Caco-2 (cell line): ENCODE measurements at regions of chr14 and their contacts with region 1.

Region 1: GRCh38 chr14:38867561-38868150 is 235.4 kb downstream of the SEC23A start:
- DNase-seq: peak; percentile 73 to 74
- H3K4me3 ChIP-seq: no peak overlapping the region
- H3K4me3 Mint-ChIP-seq: no peak overlapping the region
- H3K27ac Mint-ChIP-seq: no peak overlapping the region
- H3K4me1 ChIP-seq: peaks cover 3% of the 10 kb centered on the region; the same call in 1 of the 2 replicates
- H3K4me1 Mint-ChIP-seq: peaks cover 9% of the 10 kb centered on the region
- H3K27me3 ChIP-seq: no peaks in the 10 kb centered on the region; the same call in 1 of the 2 replicates
- H3K27me3 Mint-ChIP-seq: no peaks in the 10 kb centered on the region
- CTCF ChIP-seq: peak; percentile 73 to 80

Region 2: GRCh38 chr14:38442208-38442607 is 425.4 kb before region 1 on chr14:
- CTCF ChIA-PET with region 1: no interaction called
- POLR2A ChIA-PET with region 1: no interaction called
- intact Hi-C with region 1: no loop called
- DNase-seq: no peak
- H3K4me3 ChIP-seq: no peak overlapping the region
- H3K4me3 Mint-ChIP-seq: no peak overlapping the region
- H3K27ac Mint-ChIP-seq: no peak overlapping the region
- H3K4me1 ChIP-seq: no peaks in the 10 kb centered on the region
- H3K4me1 Mint-ChIP-seq: no peaks in the 10 kb centered on the region
- H3K27me3 ChIP-seq: no peaks in the 10 kb centered on the region
- H3K27me3 Mint-ChIP-seq: no peaks in the 10 kb centered on the region
- CTCF ChIP-seq: no peak

Region 3: GRCh38 chr14:38605193-38606114 is 262.2 kb before region 1 on chr14:
- CTCF ChIA-PET with region 1: interaction called, 4 read pairs
- POLR2A ChIA-PET with region 1: no interaction called
- intact Hi-C with region 1: loop called (anchors 1 kb)
- DNase-seq: no peak
- H3K4me3 ChIP-seq: no peak overlapping the region
- H3K4me3 Mint-ChIP-seq: no peak overlapping the region
- H3K27ac Mint-ChIP-seq: no peak overlapping the region
- H3K4me1 ChIP-seq: no peaks in the 10 kb centered on the region
- H3K4me1 Mint-ChIP-seq: no peaks in the 10 kb centered on the region
- H3K27me3 ChIP-seq: no peaks in the 10 kb centered on the region
- H3K27me3 Mint-ChIP-seq: peaks cover under 1% of the 10 kb centered on the region
- CTCF ChIP-seq: peak; percentile 10 to 29

Region 4: GRCh38 chr14:38721822-38722431 is 145.7 kb before region 1 on chr14:
- CTCF ChIA-PET with region 1: no interaction called
- POLR2A ChIA-PET with region 1: no interaction called
- intact Hi-C with region 1: loop called (anchors 1 kb)
- DNase-seq: peak in 1 of 2 experiments; percentile 57
- H3K4me3 ChIP-seq: no peak overlapping the region
- H3K4me3 Mint-ChIP-seq: no peak overlapping the region
- H3K27ac Mint-ChIP-seq: no peak overlapping the region
- H3K4me1 ChIP-seq: no peaks in the 10 kb centered on the region
- H3K4me1 Mint-ChIP-seq: no peaks in the 10 kb centered on the region
- H3K27me3 ChIP-seq: no peaks in the 10 kb centered on the region
- H3K27me3 Mint-ChIP-seq: peaks cover 9% of the 10 kb centered on the region
- CTCF ChIP-seq: peak; percentile 51 to 75

Region 5: GRCh38 chr14:38786921-38787320 is 80.7 kb before region 1 on chr14:
- CTCF ChIA-PET with region 1: no interaction called
- POLR2A ChIA-PET with region 1: no interaction called
- intact Hi-C with region 1: no loop called
- DNase-seq: no peak
- H3K4me3 ChIP-seq: no peak overlapping the region
- H3K4me3 Mint-ChIP-seq: no peak overlapping the region
- H3K27ac Mint-ChIP-seq: no peak overlapping the region
- H3K4me1 ChIP-seq: no peaks in the 10 kb centered on the region
- H3K4me1 Mint-ChIP-seq: no peaks in the 10 kb centered on the region
- H3K27me3 ChIP-seq: no peaks in the 10 kb centered on the region
- H3K27me3 Mint-ChIP-seq: peaks cover 5% of the 10 kb centered on the region
- CTCF ChIP-seq: no peak